Mucosa of descending colon (tissue), 3 donors: ENCODE measurements at regions of chr7 and their contacts with region 1.

Region 1: DNA sequence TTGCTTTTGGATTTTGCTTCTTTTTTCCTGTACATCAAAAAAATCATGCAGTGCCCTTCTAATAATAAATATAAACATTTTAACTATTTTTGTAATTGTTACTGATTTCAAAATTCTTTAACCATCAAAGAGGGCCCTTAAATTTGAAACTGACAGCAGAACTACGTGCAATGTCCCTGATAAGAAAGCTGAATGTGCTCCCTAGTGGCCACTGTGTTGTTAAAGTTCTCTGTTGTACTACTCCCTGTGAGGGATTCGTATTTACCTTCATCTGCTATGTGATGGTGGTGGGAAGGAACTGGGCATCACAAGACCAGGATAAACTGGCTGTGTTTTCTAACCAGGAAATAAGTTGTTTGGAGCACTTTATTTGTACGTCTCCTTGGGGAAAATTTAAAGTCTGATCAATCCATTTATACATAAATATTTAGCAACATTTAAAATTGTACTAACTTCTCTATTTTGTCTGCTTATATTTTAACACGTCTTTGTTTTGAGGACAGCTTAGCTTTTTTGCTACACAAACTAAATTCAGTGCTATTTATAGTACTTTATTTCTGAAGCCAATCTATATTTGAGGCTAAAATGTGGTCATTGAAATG is 322.4 kb downstream of the HGF start:
- DNase-seq: peak in 1 of 3 donors; percentile 67
- ATAC-seq: peak; percentile 79
- H3K4me3 ChIP-seq: no peak overlapping the region
- H3K4me1 ChIP-seq: no peaks in the 10 kb centered on the region
- CTCF ChIP-seq: no peak

Region 2: GRCh38 chr7:80918909-80919662 is 528.4 kb before region 1 on chr7 and contains the start of gene SEMA3C:
- intact Hi-C with region 1: loop called in 1 of 2 experiments (anchors 5 kb)
- DNase-seq: peak; percentile 91 to 95 (median 92)
- ATAC-seq: peak; percentile 90
- H3K4me3 ChIP-seq: peak within 1 kb of the TSS; percentile 23
- H3K4me1 ChIP-seq: no peaks in the 10 kb centered on the region
- CTCF ChIP-seq: no peak
- total RNA-seq, gene SEMA3C: 72.4 to 150 (median 83.7) TPM

Region 3: GRCh38 chr7:81333004-81333403 is 114.4 kb before region 1 on chr7:
- intact Hi-C with region 1: no loop called
- DNase-seq: no peak
- ATAC-seq: no peak
- H3K4me3 ChIP-seq: no peak overlapping the region
- H3K4me1 ChIP-seq: no peaks in the 10 kb centered on the region
- CTCF ChIP-seq: no peak